ENCODE measurements at regions of chr3 and their contacts with region 1.

Region 1: GRCh38 chr3:94062431-94063404 is at the starts of genes DHFR2 and NSUN3:
- DNase-seq: peak; percentile 96
- H3K4me3 ChIP-seq: peak within 1 kb of the TSS; percentile 62 to 72 (median 67)
- H3K27ac ChIP-seq: peak within 1 kb of the TSS; percentile 89 to 93 (median 92)
- H3K4me1 ChIP-seq: peaks cover 0 to 29% (median 21%) of the 10 kb centered on the region in 4 donors
- H3K27me3 ChIP-seq: no peaks in the 10 kb centered on the region
- CTCF ChIP-seq: no peak
- EP300 ChIP-seq: no peak
- POLR2A ChIP-seq: peak in 1 of 2 donors; percentile 14
- total RNA-seq, gene DHFR2: 3.0 to 5.4 (median 4.5) TPM
- total RNA-seq, gene NSUN3: 7.3 to 13.8 (median 9.4) TPM

Region 2: GRCh38 chr3:93961489-93961888 is 101.2 kb before region 1 on chr3:
- intact Hi-C with region 1: no loop called
- DNase-seq: no peak
- H3K4me3 ChIP-seq: no peak overlapping the region
- H3K27ac ChIP-seq: no peak overlapping the region
- H3K4me1 ChIP-seq: no peaks in the 10 kb centered on the region
- H3K27me3 ChIP-seq: no peaks in the 10 kb centered on the region
- CTCF ChIP-seq: no peak
- EP300 ChIP-seq: no peak
- POLR2A ChIP-seq: no peak

Region 3: DNA sequence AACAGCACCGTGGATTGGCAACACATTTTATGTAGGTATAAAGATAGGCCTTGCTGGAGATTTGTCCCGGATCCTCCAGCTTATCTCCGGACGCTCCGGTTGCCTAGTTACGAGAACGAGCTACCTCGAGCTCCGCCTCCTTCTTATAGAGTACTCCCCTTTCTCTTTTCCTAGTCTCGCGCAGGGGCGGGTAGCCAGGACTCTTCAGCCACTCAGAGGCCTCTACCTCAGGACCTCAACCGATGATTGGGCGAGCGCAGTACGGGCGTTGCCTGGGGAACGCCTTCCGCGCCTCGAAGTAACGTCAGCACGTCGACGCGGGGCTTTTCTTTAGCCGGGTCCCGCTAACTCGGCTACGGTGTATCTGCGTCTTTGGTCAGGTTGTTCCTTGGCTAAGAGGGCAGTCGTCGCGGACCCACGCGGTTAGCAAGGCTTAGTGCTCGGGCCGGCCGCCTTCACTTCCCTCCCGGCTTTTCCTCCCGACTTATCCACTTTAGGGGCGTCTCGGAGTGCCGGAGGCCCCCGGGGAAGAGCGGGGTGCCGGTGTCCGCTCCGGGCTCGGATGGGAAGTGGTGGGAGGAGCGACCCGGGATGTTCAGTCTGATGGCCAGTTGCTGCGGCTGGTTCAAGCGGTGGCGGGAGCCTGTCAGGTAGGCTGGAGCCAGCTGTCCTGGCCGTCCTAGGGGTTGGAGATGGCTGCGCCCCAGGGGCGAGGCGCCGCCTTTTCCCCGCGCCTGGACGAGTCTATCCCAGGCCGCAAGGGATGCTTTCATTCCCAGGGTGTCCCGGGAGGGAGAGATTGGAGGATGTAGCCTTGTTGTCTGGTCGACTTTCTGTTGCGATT is 82.7 kb before region 1 on chr3 and contains the start of gene ARL13B:
- intact Hi-C with region 1: loop called (anchors 2 kb)
- DNase-seq: peak; percentile 100
- H3K4me3 ChIP-seq: peak within 1 kb of the TSS; percentile 63 to 83 (median 76)
- H3K27ac ChIP-seq: peak within 1 kb of the TSS; percentile 87 to 98 (median 94)
- H3K4me1 ChIP-seq: peaks cover 0 to 12% (median 9%) of the 10 kb centered on the region in 4 donors
- H3K27me3 ChIP-seq: no peaks in the 10 kb centered on the region
- CTCF ChIP-seq: no peak
- EP300 ChIP-seq: no peak
- POLR2A ChIP-seq: peak; percentile 79 to 84
- total RNA-seq, gene ARL13B: 9.6 to 14.0 (median 12.8) TPM

Region 4: GRCh38 chr3:93992207-93992606 is 70.5 kb before region 1 on chr3:
- intact Hi-C with region 1: no loop called
- DNase-seq: no peak
- H3K4me3 ChIP-seq: no peak overlapping the region
- H3K27ac ChIP-seq: no peak overlapping the region
- H3K4me1 ChIP-seq: peaks cover 0 to 7% (median 1%) of the 10 kb centered on the region in 4 donors
- H3K27me3 ChIP-seq: no peaks in the 10 kb centered on the region
- CTCF ChIP-seq: no peak
- EP300 ChIP-seq: no peak
- POLR2A ChIP-seq: no peak

Region 5: GRCh38 chr3:94004301-94004910 is 58.3 kb before region 1 on chr3:
- intact Hi-C with region 1: loop called (anchors 2 kb)
- DNase-seq: no peak
- H3K4me3 ChIP-seq: peak overlapping the region; percentile 1 to 38 (median 32)
- H3K27ac ChIP-seq: peak overlapping the region in 1 of 4 donors; percentile 35
- H3K4me1 ChIP-seq: no peaks in the 10 kb centered on the region
- H3K27me3 ChIP-seq: no peaks in the 10 kb centered on the region
- CTCF ChIP-seq: peak; percentile 35 to 71 (median 62)
- EP300 ChIP-seq: no peak
- POLR2A ChIP-seq: no peak

Measured in sigmoid colon (tissue), 7 donors.